ENCODE measurements at regions of chr1 and their contacts with region 1.

Region 1: GRCh38 chr1:197915862-197916499 is 1.2 kb upstream of the LHX9 start:
- DNase-seq: peak; percentile 52
- H3K4me3 ChIP-seq: no peak overlapping the region
- H3K27ac ChIP-seq: no peak overlapping the region
- H3K4me1 ChIP-seq: peaks cover 27% of the 10 kb centered on the region
- H3K27me3 ChIP-seq: peaks cover 100% of the 10 kb centered on the region
- CTCF ChIP-seq: peak; percentile 32

Region 2: GRCh38 chr1:197614916-197615692 is 300.9 kb before region 1 on chr1:
- intact Hi-C with region 1: loop called (anchors 5 kb)
- DNase-seq: peak; percentile 31
- H3K4me3 ChIP-seq: no peak overlapping the region
- H3K27ac ChIP-seq: no peak overlapping the region
- H3K4me1 ChIP-seq: peaks cover 3% of the 10 kb centered on the region
- H3K27me3 ChIP-seq: no peaks in the 10 kb centered on the region
- CTCF ChIP-seq: peak; percentile 30

Region 3: DNA sequence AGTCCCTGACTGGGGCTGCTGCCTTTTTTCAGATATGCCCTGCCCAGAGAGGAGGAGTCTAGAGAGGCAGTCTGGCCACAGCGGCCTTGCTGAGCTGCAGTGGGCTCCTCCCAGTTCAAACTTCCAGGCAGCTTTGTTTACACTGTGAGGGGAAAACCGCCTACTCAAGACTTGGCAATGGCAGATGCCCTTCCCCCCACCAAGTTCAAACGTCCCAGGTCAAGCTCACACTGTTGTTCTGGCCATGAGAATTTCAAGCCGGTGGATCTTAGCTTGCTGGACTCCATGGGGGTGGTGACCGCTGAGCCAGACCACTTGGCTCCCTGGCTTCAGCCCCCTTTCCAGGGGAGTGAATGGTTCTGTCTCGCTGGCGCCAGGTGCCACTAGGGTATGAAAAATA is 31.8 kb before region 1 on chr1:
- intact Hi-C with region 1: no loop called
- DNase-seq: peak; percentile 57
- H3K4me3 ChIP-seq: no peak overlapping the region
- H3K27ac ChIP-seq: no peak overlapping the region
- H3K4me1 ChIP-seq: no peaks in the 10 kb centered on the region
- H3K27me3 ChIP-seq: no peaks in the 10 kb centered on the region
- CTCF ChIP-seq: no peak